ENCODE measurements at regions of chr1 and their contacts with region 1.

Region 1: DNA sequence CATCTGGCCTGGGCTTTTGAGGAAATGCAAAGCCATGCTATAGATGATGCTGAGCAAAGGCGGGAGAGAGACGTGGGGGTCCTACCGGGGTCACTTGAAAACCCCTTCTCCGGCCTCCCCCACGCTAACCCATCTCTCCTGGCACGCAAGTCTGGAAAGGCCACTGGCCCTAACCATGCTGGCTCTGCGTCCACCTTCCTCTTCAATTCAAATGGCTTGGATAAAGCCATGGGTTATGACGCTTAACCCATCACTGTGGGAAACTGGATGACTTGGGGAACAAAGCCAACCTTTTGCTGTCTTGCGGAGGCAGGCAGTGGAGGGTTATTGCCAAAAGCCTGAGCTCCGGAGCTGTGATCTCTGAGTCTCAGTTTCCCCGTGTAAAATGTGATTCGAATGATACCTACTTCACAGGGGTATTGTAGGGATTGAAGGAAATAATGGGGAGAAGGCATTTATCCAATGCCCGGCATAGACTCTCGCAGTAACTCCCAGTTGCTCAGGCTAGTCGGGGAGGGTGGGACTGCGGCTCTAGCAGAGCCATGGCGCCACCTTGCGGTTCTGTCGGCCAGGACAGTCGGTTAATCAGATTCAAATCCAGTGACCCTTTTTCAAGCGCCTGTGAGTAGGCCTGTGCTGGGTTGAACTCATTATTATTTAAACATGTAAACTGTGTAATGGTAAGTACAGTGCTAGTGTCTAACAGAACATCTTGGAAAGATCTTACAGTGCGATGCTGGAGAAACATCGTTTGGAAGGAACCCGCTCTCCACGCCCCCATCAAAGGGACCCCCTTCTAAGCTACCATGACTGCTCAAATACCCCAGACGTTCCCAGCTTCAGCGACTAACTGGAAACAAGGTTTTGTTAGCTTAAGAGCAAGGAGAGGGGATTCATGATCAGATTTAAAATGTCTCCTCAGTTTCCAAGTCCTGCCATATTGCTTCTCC is 20.3 kb downstream of the NEK2 start:
- DNase-seq: peak; percentile 89
- H3K4me3 ChIP-seq: no peak overlapping the region
- H3K27ac ChIP-seq: no peak overlapping the region
- H3K4me1 ChIP-seq: no peaks in the 10 kb centered on the region
- H3K27me3 ChIP-seq: no peaks in the 10 kb centered on the region
- CTCF ChIP-seq: peak; percentile 84

Region 2: GRCh38 chr1:211469938-211470529 is 185.1 kb before region 1 on chr1:
- intact Hi-C with region 1: loop called (anchors 2 kb)
- DNase-seq: peak; percentile 91
- H3K4me3 ChIP-seq: no peak overlapping the region
- H3K27ac ChIP-seq: no peak overlapping the region
- H3K4me1 ChIP-seq: peaks cover 3% of the 10 kb centered on the region
- H3K27me3 ChIP-seq: no peaks in the 10 kb centered on the region
- CTCF ChIP-seq: peak; percentile 83

Region 3: GRCh38 chr1:211520641-211521040 is 134.5 kb before region 1 on chr1:
- intact Hi-C with region 1: loop called (anchors 5 kb)
- DNase-seq: no peak
- H3K4me3 ChIP-seq: no peak overlapping the region
- H3K27ac ChIP-seq: no peak overlapping the region
- H3K4me1 ChIP-seq: no peaks in the 10 kb centered on the region
- H3K27me3 ChIP-seq: no peaks in the 10 kb centered on the region
- CTCF ChIP-seq: no peak

Region 4: DNA sequence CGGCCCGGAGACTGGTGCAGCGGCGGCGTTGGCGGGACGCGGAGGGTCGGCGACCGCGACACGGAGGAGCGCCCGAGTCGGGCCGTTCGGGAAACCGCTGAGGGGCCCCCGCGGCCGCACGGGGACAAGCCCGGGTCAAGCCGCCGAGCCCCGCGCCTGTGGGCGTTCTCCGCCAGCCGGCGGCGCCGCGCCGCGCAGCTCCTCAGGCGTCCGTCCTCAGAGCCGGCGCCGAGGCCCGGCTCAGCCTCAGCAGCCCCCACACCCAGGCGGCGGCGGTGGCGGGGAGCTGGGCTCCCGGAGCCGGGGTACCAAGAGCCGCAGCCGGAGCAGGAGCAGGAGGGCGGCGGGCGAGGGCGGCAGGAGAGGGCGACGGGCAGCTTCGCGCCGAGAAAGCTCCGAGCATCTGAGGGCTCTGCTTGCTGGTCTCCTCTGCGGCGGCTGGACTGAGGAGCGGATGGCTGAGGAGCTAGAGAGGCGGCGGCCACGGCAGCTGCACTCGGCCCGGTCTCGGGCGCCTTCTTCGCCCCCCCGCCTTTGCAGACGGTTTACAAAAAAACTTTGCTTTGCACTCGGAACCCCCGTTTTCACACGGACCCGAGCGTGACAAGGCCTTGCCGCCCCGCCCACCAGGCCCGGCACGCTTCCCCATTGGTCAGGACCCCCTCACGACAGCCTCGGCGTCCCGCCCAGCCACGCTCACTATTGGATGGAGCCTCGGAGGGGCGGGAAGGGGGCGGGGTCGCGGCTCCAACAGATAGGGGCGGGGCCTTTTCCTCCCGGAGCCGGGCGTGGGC is 76.3 kb before region 1 on chr1 and contains the start of gene SLC30A1:
- intact Hi-C with region 1: loop called (anchors 5 kb)
- DNase-seq: peak; percentile 100
- H3K4me3 ChIP-seq: peak within 1 kb of the TSS; percentile 66
- H3K27ac ChIP-seq: peak within 1 kb of the TSS; percentile 98
- H3K4me1 ChIP-seq: no peaks in the 10 kb centered on the region
- H3K27me3 ChIP-seq: no peaks in the 10 kb centered on the region
- CTCF ChIP-seq: no peak
- total RNA-seq, gene SLC30A1: 18.5 to 28.0 TPM